Posterior vena cava (tissue), 2 donors: ENCODE measurements at regions of chrX and their contacts with region 1.

Region 1: DNA sequence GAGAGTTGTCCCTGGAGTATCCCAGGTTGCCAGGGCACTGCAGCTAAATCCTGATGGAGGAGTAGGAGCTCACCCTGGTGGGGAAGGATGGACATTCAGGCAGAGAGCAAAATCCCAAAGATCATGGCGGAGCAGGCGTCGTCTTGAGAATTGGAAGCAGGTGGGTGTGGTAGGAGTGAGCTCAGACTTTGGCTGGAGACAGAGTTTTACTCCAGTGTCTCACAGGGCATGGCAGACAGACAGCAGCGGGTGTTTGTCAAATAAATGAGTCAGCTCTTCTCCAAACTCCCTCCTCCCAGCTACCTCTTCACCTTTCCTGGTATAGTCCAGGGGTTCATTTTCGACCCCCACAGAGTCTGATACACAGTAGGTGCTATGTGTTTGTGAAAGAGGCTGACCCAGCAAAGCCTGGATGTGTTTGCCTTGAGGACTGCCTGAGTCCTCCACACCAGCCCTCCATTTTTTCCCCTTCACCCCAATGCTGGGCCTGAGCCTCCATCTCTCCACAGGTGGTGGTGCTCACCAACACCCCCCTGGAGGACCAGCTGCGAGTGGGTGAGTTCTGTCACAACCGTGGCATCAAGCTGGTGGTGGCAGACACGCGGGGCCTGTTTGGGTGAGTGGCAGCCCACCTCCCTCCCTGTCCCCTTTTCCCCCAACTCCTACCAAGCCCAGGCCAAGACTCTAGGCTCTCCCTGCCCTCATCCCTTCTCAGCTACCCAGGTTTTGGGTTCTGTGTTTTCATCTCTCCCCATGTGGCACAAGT is 6.9 kb downstream of the UBA1 start:
- DNase-seq: no peak

Region 2: GRCh38 chrX:46601283-46601682 is 599.3 kb before region 1 on chrX:
- intact Hi-C with region 1: no loop called
- DNase-seq: no peak

Region 3: DNA sequence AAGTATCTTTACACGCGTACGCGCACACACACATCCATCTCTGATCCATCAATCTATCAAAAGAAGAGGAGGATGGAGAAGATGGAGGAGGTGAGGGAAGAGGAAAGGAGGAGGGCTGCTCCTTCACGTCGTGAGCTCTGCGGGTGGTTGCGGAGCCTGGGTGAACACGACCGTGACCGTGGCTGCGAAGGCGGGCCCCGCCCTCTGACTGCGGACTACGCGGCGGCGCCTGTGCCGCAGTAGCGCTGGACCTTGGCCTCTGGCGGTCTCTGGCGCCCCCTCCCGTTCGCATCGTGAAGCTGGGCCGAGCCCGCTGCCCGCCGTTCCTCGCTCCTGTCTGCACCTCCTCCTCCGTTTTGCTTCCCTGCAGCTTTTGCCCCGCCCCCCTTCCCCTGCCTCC is 322.7 kb after region 1 on chrX:
- intact Hi-C with region 1: loop called (anchors 5 to 10 kb)
- DNase-seq: peak; percentile 94

Region 4: DNA sequence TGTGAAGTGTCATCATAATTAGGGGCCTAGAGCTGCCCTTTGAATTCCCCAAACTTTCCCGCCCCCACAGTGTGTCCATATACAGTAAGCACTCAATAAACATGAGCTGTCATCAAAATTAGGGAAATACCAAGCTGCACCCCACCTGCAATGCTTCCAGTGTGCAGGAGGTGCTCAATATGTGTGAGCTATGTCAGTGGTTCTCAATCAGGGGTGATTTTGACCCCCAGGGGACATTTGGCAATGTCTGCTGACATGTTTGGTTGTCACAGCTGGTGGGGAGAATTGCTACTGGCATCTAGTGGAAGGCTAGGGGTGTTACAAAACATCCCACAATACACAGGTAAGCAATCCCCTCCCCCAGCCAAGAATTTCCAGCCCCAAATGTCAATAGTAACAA is 428.4 kb after region 1 on chrX:
- intact Hi-C with region 1: no loop called
- DNase-seq: no peak